ENCODE measurements at regions of chr1 and their contacts with region 1.

Region 1: DNA sequence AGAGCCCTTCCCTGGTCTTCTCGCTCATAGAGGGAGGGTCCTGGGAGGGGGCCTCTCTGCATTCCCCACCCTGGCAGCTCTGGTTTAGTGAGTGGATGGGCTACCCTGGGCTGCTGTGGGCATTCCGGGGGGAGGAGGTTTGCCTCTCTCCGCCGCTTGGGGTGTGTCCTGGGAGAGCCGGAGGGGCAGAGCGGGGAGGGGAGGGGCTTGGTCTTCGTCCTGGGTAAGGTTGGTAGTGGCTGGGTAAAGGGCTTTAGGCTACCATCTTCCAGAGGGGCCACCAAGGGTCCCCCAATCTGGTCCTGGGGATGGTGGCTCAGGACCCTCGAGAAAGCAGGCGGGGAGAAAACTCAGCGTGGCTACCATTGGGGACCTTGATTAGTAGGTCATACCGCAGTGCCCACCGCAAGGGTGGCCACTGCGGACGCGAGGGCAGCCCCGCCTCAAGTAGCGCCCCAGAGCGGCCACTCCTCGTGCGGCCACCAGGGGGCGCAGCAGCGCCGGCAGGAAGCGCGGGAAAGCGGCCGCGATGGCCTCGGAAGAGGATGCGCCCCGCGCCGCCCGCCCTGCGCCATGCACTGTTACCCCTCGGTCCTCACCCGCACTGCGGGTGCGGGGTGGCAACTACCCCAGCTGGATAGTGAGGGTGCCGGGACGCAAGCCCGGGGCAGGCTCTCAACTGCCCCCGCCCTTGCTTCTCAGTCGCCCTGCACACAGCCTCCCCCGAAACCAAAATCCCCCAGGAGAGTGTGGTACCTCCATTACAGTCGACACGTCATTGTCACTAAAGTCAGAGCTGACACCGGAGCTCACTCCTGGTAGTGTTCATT is 44.1 kb upstream of the SLC25A33 start:
- DNase-seq: peak; percentile 73
- ATAC-seq: peak; percentile 86
- H3K4me3 Mint-ChIP-seq: peak overlapping the region; percentile 61
- H3K27ac Mint-ChIP-seq: peak overlapping the region; percentile 49
- H3K4me1 Mint-ChIP-seq: peaks cover 10% of the 10 kb centered on the region
- H3K27me3 Mint-ChIP-seq: peaks cover 33% of the 10 kb centered on the region

Region 2: GRCh38 chr1:9145021-9145668 is 350.0 kb before region 1 on chr1:
- CTCF ChIA-PET with region 1: interaction called, 17 read pairs
- DNase-seq: no peak
- ATAC-seq: peak; percentile 17
- H3K4me3 Mint-ChIP-seq: no peak overlapping the region
- H3K27ac Mint-ChIP-seq: no peak overlapping the region
- H3K4me1 Mint-ChIP-seq: peaks cover 8% of the 10 kb centered on the region
- H3K27me3 Mint-ChIP-seq: no peaks in the 10 kb centered on the region

Region 3: GRCh38 chr1:9211291-9211811 is 283.8 kb before region 1 on chr1:
- CTCF ChIA-PET with region 1: no interaction called
- DNase-seq: no peak
- ATAC-seq: no peak
- H3K4me3 Mint-ChIP-seq: no peak overlapping the region
- H3K27ac Mint-ChIP-seq: no peak overlapping the region
- H3K4me1 Mint-ChIP-seq: peaks cover 17% of the 10 kb centered on the region
- H3K27me3 Mint-ChIP-seq: peaks cover 21% of the 10 kb centered on the region

Region 4: GRCh38 chr1:9249534-9250410 is 245.4 kb before region 1 on chr1:
- CTCF ChIA-PET with region 1: interaction called, 10 read pairs
- DNase-seq: peak; percentile 57
- ATAC-seq: peak; percentile 69
- H3K4me3 Mint-ChIP-seq: no peak overlapping the region
- H3K27ac Mint-ChIP-seq: no peak overlapping the region
- H3K4me1 Mint-ChIP-seq: peaks cover 4% of the 10 kb centered on the region
- H3K27me3 Mint-ChIP-seq: no peaks in the 10 kb centered on the region

Region 5: GRCh38 chr1:9292361-9293240 is 202.5 kb before region 1 on chr1 and contains the start of gene SPSB1:
- CTCF ChIA-PET with region 1: interaction called, 87 read pairs
- DNase-seq: peak; percentile 75
- ATAC-seq: peak; percentile 72
- H3K4me3 Mint-ChIP-seq: peak within 1 kb of the TSS; percentile 40
- H3K27ac Mint-ChIP-seq: no peak within 1 kb of the TSS
- H3K4me1 Mint-ChIP-seq: peaks cover 9% of the 10 kb centered on the region
- H3K27me3 Mint-ChIP-seq: peaks cover 15% of the 10 kb centered on the region
- total RNA-seq, gene SPSB1: 8.2 to 9.0 TPM

Measured in activated CD8-positive, alpha-beta memory T cell treated with anti-CD3 and anti-CD28 coated beads, Interleukin-2, amount 10 ng/mL, durations not matched to agents 7 days and 5 days (primary cell).